IMR-90 (cell line): ENCODE measurements at regions of chr17 and their contacts with region 1.

Region 1: DNA sequence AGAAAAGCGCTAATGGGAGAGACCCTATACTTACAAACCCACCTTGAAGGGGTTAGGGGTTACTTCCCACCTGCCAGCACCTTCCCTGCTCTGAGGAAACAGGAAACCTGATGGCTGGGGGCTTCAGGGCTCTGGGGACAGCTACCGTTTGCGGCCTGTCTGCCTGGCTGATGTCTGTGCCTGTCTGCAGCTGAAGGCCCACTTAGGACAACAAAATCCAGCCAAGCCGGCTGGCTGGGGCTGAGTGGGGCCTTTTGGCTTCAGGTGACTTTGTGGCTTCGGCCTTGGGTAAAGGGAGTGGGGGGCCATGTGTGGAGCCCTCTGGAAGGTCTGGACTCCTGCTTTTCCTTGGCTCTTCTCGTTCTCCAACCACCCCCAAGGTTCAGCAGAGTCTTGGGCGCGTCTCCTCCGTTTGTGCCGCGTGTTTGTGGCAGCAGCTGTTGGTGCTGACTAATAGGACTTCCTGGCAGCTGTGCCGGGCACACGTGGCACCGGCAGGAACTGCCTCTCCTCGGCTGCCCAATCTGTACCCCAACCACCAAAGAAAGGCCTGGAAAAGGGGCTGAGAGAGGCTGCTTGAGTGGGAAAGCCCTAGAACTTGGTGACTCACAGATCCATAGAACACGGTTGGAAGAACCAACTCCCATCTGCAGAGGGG is 186.7 kb downstream of the MSI2 start:
- DNase-seq: no peak
- ATAC-seq: no peak
- H3K4me3 ChIP-seq: no peak overlapping the region
- H3K27ac ChIP-seq: peak overlapping the region; percentile 70; the same call in 1 of the 2 replicates
- H3K4me1 ChIP-seq: peaks cover 41% of the 10 kb centered on the region
- H3K27me3 ChIP-seq: no peaks in the 10 kb centered on the region
- CTCF ChIP-seq: no peak
- POLR2A ChIP-seq: no peak
- RAD21 ChIP-seq: no peak

Region 2: GRCh38 chr17:57016747-57017082 is 426.3 kb before region 1 on chr17:
- CTCF ChIA-PET with region 1: no interaction called
- POLR2A ChIA-PET with region 1: no interaction called
- dilution Hi-C with region 1: no loop called
- in situ Hi-C with region 1: no loop called
- intact Hi-C with region 1: no loop called
- DNase-seq: peak; percentile 34
- ATAC-seq: 0 out of 2 replicates have a peak, but pooled peaks have one; percentile 42
- H3K4me3 ChIP-seq: no peak overlapping the region
- H3K27ac ChIP-seq: no peak overlapping the region
- H3K4me1 ChIP-seq: no peaks in the 10 kb centered on the region
- H3K27me3 ChIP-seq: peaks cover 1% of the 10 kb centered on the region; the same call in 1 of the 2 replicates
- CTCF ChIP-seq: no peak
- POLR2A ChIP-seq: no peak
- RAD21 ChIP-seq: no peak

Region 3: GRCh38 chr17:57068222-57068658 is 374.8 kb before region 1 on chr17:
- CTCF ChIA-PET with region 1: no interaction called
- POLR2A ChIA-PET with region 1: no interaction called
- dilution Hi-C with region 1: no loop called
- in situ Hi-C with region 1: no loop called
- intact Hi-C with region 1: no loop called
- DNase-seq: no peak
- ATAC-seq: no peak; the same call in 1 of the 2 replicates
- H3K4me3 ChIP-seq: no peak overlapping the region
- H3K27ac ChIP-seq: no peak overlapping the region
- H3K4me1 ChIP-seq: no peaks in the 10 kb centered on the region
- H3K27me3 ChIP-seq: peaks cover 3% of the 10 kb centered on the region
- CTCF ChIP-seq: no peak
- POLR2A ChIP-seq: no peak
- RAD21 ChIP-seq: no peak

Region 4: GRCh38 chr17:57406131-57406980 is 36.7 kb before region 1 on chr17:
- CTCF ChIA-PET with region 1: no interaction called
- POLR2A ChIA-PET with region 1: no interaction called
- dilution Hi-C with region 1: no loop called
- in situ Hi-C with region 1: no loop called
- intact Hi-C with region 1: loop called (anchors 2 kb)
- DNase-seq: peak; percentile 44
- ATAC-seq: peak; percentile 46; the same call in 1 of the 2 replicates
- H3K4me3 ChIP-seq: no peak overlapping the region
- H3K27ac ChIP-seq: no peak overlapping the region
- H3K4me1 ChIP-seq: peaks cover 12% of the 10 kb centered on the region
- H3K27me3 ChIP-seq: no peaks in the 10 kb centered on the region
- CTCF ChIP-seq: no peak
- POLR2A ChIP-seq: no peak
- RAD21 ChIP-seq: no peak